Dendritic cell treated with granulocyte-macrophage colony-stimulating factor and Interleukin-4, amounts not matched to agents 40 ng/mL and 50 ng/mL, for 4 days (primary cell): ENCODE measurements at regions of chr16 and their contacts with region 1.

Region 1: DNA sequence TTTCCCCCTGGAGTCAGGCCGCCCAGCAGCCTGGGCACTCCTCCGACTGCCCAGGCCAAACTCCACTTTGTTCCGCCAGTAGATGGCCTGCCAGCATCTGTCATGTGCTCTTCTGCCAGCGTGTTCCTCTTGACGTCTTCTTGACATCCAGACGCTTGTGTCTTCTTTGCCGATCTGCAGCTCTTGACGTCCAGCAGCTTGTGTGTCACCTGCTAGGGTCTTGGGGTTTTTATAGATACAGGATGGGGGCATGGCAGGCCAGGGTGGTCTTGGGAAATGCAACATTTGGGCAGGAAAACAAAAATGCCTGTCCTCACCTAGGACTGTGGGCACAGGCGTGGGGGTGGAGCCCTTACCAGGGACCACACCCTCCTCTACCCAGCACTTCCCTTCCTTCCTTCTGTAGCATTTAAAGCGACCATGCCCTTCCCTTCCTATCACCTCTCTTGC is 88.7 kb downstream of the BMERB1 start:
- H3K4me3 Mint-ChIP-seq: peak overlapping the region; percentile 78
- H3K27ac Mint-ChIP-seq: peak overlapping the region; percentile 88
- H3K4me1 Mint-ChIP-seq: peaks cover 61% of the 10 kb centered on the region
- H3K27me3 Mint-ChIP-seq: no peaks in the 10 kb centered on the region

Region 2: DNA sequence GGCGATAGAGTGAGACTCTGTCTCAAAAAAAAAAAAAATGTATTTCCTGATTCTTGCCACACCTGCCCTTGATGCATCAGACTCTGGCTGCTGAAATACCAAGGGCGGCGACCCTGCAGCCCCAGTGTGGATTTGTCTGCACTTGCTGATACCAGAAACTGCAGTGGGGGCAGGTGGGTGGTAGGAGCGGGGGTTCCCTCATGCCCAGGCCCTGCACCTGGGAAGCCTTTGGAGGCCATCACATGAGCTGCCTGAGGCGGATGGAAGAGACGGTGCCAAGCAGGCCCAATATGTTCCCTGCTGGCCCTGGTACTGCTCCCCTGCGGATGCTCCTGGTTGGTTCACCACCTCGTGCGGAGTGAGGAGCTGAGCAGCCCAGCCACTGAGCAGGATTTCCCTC is 69.2 kb after region 1 on chr16:
- intact Hi-C with region 1: loop called (anchors 5 kb)
- H3K4me3 Mint-ChIP-seq: no peak overlapping the region
- H3K27ac Mint-ChIP-seq: peak overlapping the region; percentile 99
- H3K4me1 Mint-ChIP-seq: peaks cover 77% of the 10 kb centered on the region
- H3K27me3 Mint-ChIP-seq: no peaks in the 10 kb centered on the region